ENCODE measurements at regions of chrX and their contacts with region 1.

Region 1: GRCh38 chrX:152821145-152821765 is 9.3 kb downstream of the CETN2 start:
- DNase-seq: peak; percentile 31
- H3K4me3 ChIP-seq: no peak overlapping the region
- H3K27ac ChIP-seq: no peak overlapping the region
- H3K4me1 ChIP-seq: peaks cover 4% of the 10 kb centered on the region
- H3K27me3 ChIP-seq: peaks cover 1 to 3% of the 10 kb centered on the region in 2 experiments
- CTCF ChIP-seq: peak; percentile 51 to 59
- POLR2A ChIP-seq: no peak

Region 2: DNA sequence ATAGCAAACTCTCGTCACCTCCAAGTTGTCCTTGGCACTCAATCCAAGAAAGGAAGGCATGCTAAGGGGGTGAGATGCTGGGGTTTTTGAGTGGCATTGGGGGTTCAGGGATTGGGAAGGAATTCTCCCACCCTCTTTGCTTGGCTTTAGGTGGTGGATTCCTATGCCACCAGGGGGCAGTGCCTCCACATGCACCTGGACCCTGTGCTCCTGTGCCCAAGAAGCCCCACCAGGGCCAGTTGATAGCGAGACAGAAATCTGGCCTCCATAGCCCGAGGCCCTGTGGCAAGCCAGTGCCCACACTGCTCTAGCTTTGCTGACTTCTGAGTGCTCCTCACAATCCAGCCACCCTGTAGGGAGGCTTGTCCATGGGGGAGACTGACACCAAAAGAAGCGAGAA is 1107.4 kb before region 1 on chrX:
- CTCF ChIA-PET with region 1: interaction called, 5 read pairs
- POLR2A ChIA-PET with region 1: no interaction called
- dilution Hi-C with region 1: no loop called
- intact Hi-C with region 1: loop called (anchors 1 kb)
- DNase-seq: no peak
- H3K4me3 ChIP-seq: no peak overlapping the region
- H3K27ac ChIP-seq: no peak overlapping the region
- H3K4me1 ChIP-seq: no peaks in the 10 kb centered on the region
- H3K27me3 ChIP-seq: no peaks in the 10 kb centered on the region
- CTCF ChIP-seq: peak; percentile 27 to 47
- POLR2A ChIP-seq: no peak

Measured in endothelial cell of umbilical vein (primary cell).